ENCODE measurements at regions of chr19 and their contacts with region 1.

Region 1: GRCh38 chr19:13162518-13163314 is 12.5 kb downstream of the IER2 start:
- DNase-seq: peak; percentile 60 to 87 (median 72)
- ATAC-seq: peak; percentile 50 to 56
- H3K4me3 Mint-ChIP-seq: peak overlapping the region; percentile 78 to 93 (median 88)
- H3K27ac Mint-ChIP-seq: peak overlapping the region; percentile 76 to 99 (median 98)
- H3K4me1 Mint-ChIP-seq: peaks cover 23 to 91% (median 73%) of the 10 kb centered on the region in 4 donors
- H3K27me3 Mint-ChIP-seq: no peaks in the 10 kb centered on the region

Region 2: GRCh38 chr19:13104360-13104847 is 58.3 kb before region 1 on chr19:
- POLR2A ChIA-PET with region 1: interaction called, 11 read pairs
- DNase-seq: peak; percentile 42 to 79 (median 64)
- ATAC-seq: peak; percentile 42 to 60
- H3K4me3 Mint-ChIP-seq: peak overlapping the region; percentile 88 to 96 (median 91)
- H3K27ac Mint-ChIP-seq: peak overlapping the region; percentile 79 to 96 (median 92)
- H3K4me1 Mint-ChIP-seq: peaks cover 14 to 56% (median 47%) of the 10 kb centered on the region in 4 donors
- H3K27me3 Mint-ChIP-seq: no peaks in the 10 kb centered on the region

Region 3: DNA sequence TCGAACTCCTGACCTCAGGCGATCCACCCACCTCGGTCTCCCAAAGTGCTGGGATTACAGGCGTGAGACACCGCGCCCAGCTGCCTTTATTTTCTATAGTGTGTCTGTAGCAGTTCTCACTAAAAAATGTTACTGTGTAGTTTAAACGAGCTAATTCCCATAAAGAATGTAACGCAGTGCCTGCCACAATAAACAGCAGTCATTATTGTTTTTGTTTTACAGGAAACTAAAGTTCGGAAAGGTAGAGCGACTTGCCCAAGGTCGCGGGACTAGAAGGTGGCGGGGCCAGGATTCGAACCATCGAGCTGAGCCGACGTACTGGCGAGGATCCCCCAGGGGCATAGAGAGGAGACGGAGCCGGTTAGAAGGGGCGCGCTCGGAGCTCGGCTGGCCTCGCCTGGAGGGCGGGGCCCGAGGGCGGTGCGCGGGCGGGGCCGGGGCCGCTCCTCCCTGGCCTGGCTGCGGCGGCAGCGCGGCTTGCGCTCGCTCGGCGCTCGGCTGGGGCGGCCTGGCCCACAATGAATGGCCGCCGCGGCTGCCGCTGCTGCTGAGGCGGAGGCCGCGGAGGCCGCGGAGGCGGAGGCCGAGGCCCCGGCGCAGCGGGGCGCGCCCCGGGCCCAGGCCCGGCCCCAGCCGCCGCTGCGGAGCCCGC is 44.8 kb before region 1 on chr19 and contains the start of gene NACC1:
- POLR2A ChIA-PET with region 1: interaction called, 15 read pairs
- DNase-seq: peak; percentile 83 to 92 (median 88)
- ATAC-seq: peak; percentile 76 to 83
- H3K4me3 Mint-ChIP-seq: peak within 1 kb of the TSS; percentile 86 to 99 (median 98)
- H3K27ac Mint-ChIP-seq: peak within 1 kb of the TSS; percentile 92 to 98 (median 94)
- H3K4me1 Mint-ChIP-seq: peaks cover 26 to 65% (median 61%) of the 10 kb centered on the region in 4 donors
- H3K27me3 Mint-ChIP-seq: no peaks in the 10 kb centered on the region
- polyA plus RNA-seq, gene NACC1: 1.4 to 3.4 (median 1.9) TPM

Region 4: DNA sequence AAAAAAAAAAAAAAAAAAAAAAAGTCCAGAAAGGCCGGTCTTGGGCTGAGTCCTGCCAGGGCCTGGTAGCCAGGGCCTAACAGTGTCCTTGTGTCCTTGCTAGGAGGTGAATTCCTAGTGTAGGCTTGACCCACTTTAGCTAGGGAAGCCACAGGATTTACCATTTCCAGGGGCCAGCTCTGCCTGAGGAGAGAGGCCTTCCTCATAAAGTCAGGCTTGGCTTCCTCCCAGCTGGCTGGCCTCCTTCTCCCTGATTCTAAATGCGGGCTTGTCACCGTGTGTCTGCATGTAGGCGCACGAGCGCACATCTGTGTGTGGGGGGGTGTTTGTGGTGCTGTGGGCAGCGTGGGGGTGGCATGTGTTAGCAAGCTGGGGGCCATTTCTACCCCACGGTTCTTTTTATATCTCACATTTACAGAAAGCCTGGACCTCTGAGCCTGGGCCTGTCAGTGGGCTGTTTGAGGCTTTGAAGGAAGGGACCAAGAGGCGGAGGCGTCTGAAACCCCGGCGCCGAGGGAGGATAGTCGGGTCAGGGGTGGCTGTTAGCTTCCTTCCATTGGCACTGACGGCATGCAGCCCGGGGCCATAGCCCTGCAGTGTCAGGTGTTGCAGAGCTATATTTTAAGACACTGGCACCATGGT is 19.2 kb after region 1 on chr19:
- POLR2A ChIA-PET with region 1: interaction called, 918 read pairs
- DNase-seq: peak in 4 of 10 donors; percentile 19 to 58 (median 28)
- ATAC-seq: peak; percentile 60 to 78
- H3K4me3 Mint-ChIP-seq: peak overlapping the region; percentile 37 to 81 (median 66)
- H3K27ac Mint-ChIP-seq: peak overlapping the region; percentile 51 to 92 (median 80)
- H3K4me1 Mint-ChIP-seq: peaks cover 23 to 42% (median 36%) of the 10 kb centered on the region in 4 donors
- H3K27me3 Mint-ChIP-seq: no peaks in the 10 kb centered on the region

Region 5: GRCh38 chr19:13195678-13196077 is 33.0 kb after region 1 on chr19:
- POLR2A ChIA-PET with region 1: interaction called, 38 read pairs
- DNase-seq: peak in 5 of 10 donors; percentile 24 to 39 (median 34)
- ATAC-seq: peak in 1 of 2 donors; percentile 50
- H3K4me3 Mint-ChIP-seq: no peak overlapping the region
- H3K27ac Mint-ChIP-seq: peak overlapping the region in 8 of 10 donors; percentile 15 to 84 (median 60)
- H3K4me1 Mint-ChIP-seq: peaks cover 5 to 34% (median 20%) of the 10 kb centered on the region in 4 donors
- H3K27me3 Mint-ChIP-seq: no peaks in the 10 kb centered on the region

Region 6: DNA sequence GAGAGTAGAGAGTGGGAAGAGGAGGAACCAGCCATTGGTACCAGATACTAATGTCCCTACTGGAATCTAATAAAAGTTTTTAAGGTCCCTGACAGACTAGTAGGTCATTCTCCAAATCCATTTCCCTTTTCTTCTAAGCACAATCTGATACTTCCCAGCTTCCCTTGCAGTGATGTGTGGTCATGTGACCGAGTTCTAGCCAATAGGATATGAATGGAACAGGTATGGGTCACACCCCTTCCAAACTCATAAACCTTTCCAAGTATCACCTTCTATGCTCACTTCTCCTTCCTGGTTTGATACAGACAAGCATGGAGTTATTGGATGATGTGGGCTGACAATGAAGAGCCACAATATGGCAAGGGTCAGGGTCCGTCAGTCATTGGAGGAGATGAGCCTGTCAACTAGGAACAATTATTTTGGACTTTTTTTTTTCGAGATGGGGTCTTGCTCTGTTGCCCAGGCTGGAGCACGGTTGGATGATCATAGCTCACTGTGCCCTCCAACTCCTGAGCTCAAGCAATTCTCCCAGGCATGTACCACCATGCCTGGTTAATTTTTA is 288.8 kb after region 1 on chr19:
- POLR2A ChIA-PET with region 1: no interaction called
- DNase-seq: no peak
- ATAC-seq: no peak
- H3K4me3 Mint-ChIP-seq: no peak overlapping the region
- H3K27ac Mint-ChIP-seq: no peak overlapping the region
- H3K4me1 Mint-ChIP-seq: no peaks in the 10 kb centered on the region
- H3K27me3 Mint-ChIP-seq: peaks cover 8 to 35% (median 24%) of the 10 kb centered on the region in 5 donors